ENCODE measurements at regions of chr3 and their contacts with region 1.

Region 1: GRCh38 chr3:107729686-107730085 is 206.9 kb downstream of the BBX start:
- DNase-seq: no peak
- H3K4me3 Mint-ChIP-seq: no peak overlapping the region
- H3K27ac Mint-ChIP-seq: no peak overlapping the region
- H3K4me1 Mint-ChIP-seq: peaks cover 16% of the 10 kb centered on the region
- H3K27me3 Mint-ChIP-seq: no peaks in the 10 kb centered on the region

Region 2: DNA sequence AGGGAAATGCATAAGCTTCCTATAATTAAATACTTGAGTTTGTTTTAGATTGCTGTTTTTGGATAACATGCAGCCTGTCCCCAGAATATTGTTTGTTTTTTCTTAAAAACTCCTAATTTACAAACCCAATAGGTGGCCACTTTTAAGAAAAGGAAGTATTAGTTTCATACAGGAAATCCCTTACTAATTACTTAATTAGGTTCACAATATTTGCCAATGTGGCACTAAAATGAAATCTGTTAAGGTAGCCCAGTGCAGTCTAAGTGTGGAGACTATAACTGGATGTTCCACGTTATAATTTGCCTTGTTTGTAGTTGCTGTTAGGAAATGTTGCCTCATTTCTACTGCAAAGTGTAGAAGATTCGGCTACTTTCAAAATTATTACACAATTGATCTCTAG is 11.1 kb before region 1 on chr3:
- CTCF ChIA-PET with region 1: no interaction called
- POLR2A ChIA-PET with region 1: no interaction called
- intact Hi-C with region 1: loop called (anchors 1 kb)
- DNase-seq: no peak
- H3K4me3 Mint-ChIP-seq: no peak overlapping the region
- H3K27ac Mint-ChIP-seq: no peak overlapping the region
- H3K4me1 Mint-ChIP-seq: peaks cover 7% of the 10 kb centered on the region
- H3K27me3 Mint-ChIP-seq: no peaks in the 10 kb centered on the region

Measured in activated CD4-positive, alpha-beta memory T cell treated with anti-CD3 and anti-CD28 coated beads for 36 hours (primary cell).